Activated CD4-positive, alpha-beta T cell treated with anti-CD3 and anti-CD28 coated beads for 36 hours (primary cell): ENCODE measurements at regions of chr9 and their contacts with region 1.

Region 1: GRCh38 chr9:136118320-136119060 is at the start of gene TMEM250:
- DNase-seq: peak; percentile 98
- ATAC-seq: peak; percentile 92
- H3K4me3 Mint-ChIP-seq: peak within 1 kb of the TSS; percentile 77
- H3K27ac Mint-ChIP-seq: peak within 1 kb of the TSS; percentile 83
- H3K4me1 Mint-ChIP-seq: peaks cover 21% of the 10 kb centered on the region
- H3K27me3 Mint-ChIP-seq: no peaks in the 10 kb centered on the region
- total RNA-seq, gene TMEM250: 25.4 to 28.8 TPM

Region 2: DNA sequence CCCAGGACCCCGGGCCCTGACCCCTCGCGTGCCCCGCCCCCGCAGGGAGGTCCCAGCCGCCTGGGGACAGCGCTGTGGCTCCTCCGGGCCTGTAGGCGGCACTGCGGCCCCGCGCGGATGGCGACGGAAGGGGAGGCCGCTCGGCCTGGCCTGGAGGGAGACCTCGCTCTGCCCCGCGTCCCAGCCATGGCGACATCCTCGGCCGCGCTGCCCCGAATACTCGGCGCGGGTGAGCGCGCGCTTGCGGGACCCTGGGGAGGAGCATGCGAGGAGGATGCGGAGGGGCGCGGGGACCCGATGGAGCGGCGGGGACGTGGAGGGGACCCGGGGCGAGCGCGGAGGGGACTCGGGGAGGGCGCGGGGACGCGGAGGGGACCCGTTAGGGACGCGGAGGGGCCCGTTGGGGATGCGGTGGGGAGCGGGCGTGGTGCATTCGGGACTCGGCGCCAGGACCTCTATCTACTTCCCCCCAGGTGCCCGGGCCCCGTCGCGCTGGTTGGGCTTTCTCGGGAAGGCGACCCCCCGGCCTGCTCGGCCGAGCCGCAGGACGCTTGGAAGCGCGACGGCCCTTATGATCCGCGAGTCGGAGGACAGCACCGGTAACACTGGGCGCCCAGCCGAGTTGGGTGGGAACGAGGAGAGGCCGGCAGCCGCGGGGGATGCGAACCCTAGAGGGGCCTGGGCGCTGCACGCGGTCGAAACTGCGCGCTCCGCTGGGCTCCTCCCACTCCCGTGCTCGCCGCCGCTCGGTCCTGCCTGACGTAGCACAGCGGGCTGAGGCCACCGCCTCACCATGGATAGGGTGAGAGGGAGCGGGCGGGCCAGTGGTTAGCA is 617.7 kb before region 1 on chr9 and contains the start of gene MRPS2:
- CTCF ChIA-PET with region 1: no interaction called
- POLR2A ChIA-PET with region 1: no interaction called
- intact Hi-C with region 1: loop called in 1 of 2 experiments (anchors 2 kb)
- DNase-seq: peak; percentile 91
- ATAC-seq: peak; percentile 93
- H3K4me3 Mint-ChIP-seq: peak within 1 kb of the TSS; percentile 85
- H3K27ac Mint-ChIP-seq: peak within 1 kb of the TSS; percentile 91
- H3K4me1 Mint-ChIP-seq: peaks cover 19% of the 10 kb centered on the region
- H3K27me3 Mint-ChIP-seq: no peaks in the 10 kb centered on the region
- total RNA-seq, gene MRPS2: 50.0 to 70.6 TPM

Region 3: GRCh38 chr9:135701959-135702721 is 416.4 kb before region 1 on chr9 and contains the start of gene KCNT1:
- CTCF ChIA-PET with region 1: no interaction called
- POLR2A ChIA-PET with region 1: no interaction called
- intact Hi-C with region 1: loop called in 1 of 2 experiments (anchors 1 kb)
- DNase-seq: peak; percentile 74
- ATAC-seq: peak; percentile 85
- H3K4me3 Mint-ChIP-seq: no peak within 1 kb of the TSS
- H3K27ac Mint-ChIP-seq: no peak within 1 kb of the TSS
- H3K4me1 Mint-ChIP-seq: no peaks in the 10 kb centered on the region
- H3K27me3 Mint-ChIP-seq: peaks cover 3% of the 10 kb centered on the region
- total RNA-seq, gene KCNT1: not detected

Region 4: DNA sequence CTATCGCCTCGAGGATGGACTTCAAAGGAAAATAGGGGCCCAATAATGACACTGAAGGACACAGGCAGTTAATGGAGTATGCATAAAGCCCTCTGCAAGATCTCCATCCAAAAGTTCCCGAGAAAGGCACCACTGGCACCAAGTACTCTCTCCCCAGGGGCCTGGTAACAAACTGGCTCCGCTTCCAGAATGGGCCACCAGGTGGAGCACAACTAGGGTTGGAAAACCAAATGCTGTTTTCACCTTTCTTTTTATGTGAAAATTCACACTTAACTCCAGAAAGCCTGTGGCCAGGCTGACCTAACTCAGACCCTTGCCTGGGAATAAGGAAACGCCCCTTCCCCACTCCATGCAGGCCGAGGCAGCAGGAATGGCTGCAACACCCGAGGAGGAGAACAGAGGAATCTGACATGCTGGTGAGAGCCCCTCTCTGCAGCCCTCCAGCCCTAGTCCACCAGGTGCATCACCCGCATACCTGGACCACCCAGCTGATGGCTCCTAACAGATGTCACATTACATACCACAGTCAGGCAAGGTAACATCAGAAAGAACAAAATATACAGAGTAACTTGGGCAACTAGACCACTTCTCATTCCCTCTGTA is 253.9 kb before region 1 on chr9:
- CTCF ChIA-PET with region 1: interaction called, 4 read pairs
- POLR2A ChIA-PET with region 1: no interaction called
- intact Hi-C with region 1: loop called in 1 of 2 experiments (anchors 1 kb)
- DNase-seq: peak; percentile 84
- ATAC-seq: peak; percentile 58
- H3K4me3 Mint-ChIP-seq: no peak overlapping the region
- H3K27ac Mint-ChIP-seq: no peak overlapping the region
- H3K4me1 Mint-ChIP-seq: peaks cover 31% of the 10 kb centered on the region
- H3K27me3 Mint-ChIP-seq: no peaks in the 10 kb centered on the region

Region 5: DNA sequence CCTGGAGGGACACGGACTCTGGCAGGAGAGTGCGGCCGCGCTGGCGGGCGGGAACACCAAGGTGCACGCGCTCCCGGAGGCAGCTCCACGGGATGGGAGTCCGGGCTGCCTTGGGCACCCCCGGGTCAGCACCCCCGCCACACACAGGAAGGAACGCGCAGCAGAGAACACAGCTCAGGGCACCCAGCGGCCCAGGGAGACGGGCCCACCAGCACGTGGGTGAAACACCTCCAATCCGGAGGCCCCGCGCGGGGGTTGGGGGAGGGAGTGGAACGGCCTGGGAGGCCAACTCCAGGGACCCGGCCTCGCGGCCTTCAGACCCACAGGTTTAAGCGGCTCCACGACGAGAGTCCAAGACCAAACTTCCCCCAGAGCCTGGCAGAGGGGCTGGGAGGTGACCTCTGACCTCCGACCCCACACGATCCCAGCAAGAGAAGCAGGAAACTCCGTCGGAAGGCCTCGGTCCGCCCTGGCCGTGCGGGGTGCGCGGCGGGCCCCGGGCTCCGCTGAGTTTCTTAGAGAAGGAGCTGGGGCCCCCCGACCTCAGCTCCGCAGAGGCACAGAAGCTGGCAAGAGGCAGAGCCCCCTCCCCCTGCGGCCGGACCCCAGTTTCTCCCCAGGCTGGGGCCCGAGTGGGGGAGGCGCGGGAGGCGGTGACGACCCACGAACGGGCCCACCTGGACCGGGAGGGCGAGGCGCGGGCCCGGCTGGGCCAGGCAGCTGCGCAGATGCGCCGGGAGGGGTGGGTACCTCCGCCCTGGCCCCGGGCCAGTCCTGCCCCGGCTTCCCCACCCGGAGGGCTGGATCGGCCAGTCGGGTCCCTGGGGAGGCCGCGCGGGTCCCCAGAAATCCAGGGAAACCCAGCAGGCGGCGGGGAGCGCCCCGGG is 24.3 kb before region 1 on chr9:
- CTCF ChIA-PET with region 1: interaction called, 26 read pairs
- POLR2A ChIA-PET with region 1: no interaction called
- intact Hi-C with region 1: loop called (anchors 1 kb)
- DNase-seq: peak; percentile 79
- ATAC-seq: peak; percentile 74
- H3K4me3 Mint-ChIP-seq: peak overlapping the region; percentile 68
- H3K27ac Mint-ChIP-seq: peak overlapping the region; percentile 63
- H3K4me1 Mint-ChIP-seq: peaks cover 6% of the 10 kb centered on the region
- H3K27me3 Mint-ChIP-seq: peaks cover 5% of the 10 kb centered on the region

Region 6: DNA sequence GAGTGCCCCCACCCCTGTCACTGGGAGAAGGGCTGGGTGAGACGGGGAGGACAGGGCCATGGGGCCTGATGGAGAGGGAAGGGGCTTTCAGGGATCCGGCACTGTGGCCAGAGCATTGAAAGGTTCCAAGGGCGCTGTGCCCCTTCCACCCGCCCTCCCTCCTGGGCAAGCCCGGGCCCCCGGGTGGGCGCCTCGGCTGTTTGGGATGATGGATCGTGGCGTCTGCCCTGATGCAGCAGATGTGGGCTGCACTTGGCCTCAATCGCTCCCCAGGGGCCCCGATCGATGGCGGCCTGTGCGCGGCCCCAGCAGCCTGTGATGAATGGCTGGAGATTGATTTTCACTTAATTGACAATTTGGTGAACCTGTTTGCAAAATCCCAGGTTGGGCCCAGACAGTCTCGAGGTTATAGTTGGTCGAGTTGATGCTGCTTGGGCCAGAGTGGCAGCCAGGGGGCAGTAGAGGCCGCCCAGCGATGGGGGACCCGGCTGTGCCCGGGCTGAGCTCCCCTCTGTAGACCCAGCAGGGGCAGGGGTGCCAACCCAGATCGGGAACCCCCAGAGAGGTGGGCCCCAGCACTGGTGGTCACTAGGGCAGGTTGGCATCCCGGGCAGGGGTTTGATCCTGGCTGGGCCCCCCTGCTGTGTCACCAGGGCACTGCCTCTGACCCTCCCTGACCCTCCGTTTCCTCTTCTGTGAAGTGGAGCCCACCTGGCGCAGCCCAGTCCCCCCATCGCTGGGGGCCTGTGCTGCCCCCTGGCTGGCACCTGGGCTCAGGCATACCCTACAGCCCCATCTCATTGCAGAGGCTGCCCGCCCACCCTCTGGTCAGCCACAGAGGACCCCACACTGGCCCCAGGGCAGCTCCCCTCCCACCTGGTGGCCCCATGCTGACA is 51.8 kb after region 1 on chr9:
- CTCF ChIA-PET with region 1: no interaction called
- POLR2A ChIA-PET with region 1: no interaction called
- intact Hi-C with region 1: no loop called
- DNase-seq: peak; percentile 80
- ATAC-seq: peak; percentile 88
- H3K4me3 Mint-ChIP-seq: no peak overlapping the region
- H3K27ac Mint-ChIP-seq: no peak overlapping the region
- H3K4me1 Mint-ChIP-seq: no peaks in the 10 kb centered on the region
- H3K27me3 Mint-ChIP-seq: peaks cover 6% of the 10 kb centered on the region

Region 7: GRCh38 chr9:136410500-136411287 is 292.2 kb after region 1 on chr9 and contains the starts of genes ENTR1 and PMPCA:
- CTCF ChIA-PET with region 1: no interaction called
- POLR2A ChIA-PET with region 1: no interaction called
- intact Hi-C with region 1: loop called in 1 of 2 experiments (anchors 1 kb)
- DNase-seq: peak; percentile 98
- ATAC-seq: peak; percentile 75
- H3K4me3 Mint-ChIP-seq: peak within 1 kb of the TSS; percentile 90
- H3K27ac Mint-ChIP-seq: peak within 1 kb of the TSS; percentile 94
- H3K4me1 Mint-ChIP-seq: peaks cover 49% of the 10 kb centered on the region
- H3K27me3 Mint-ChIP-seq: no peaks in the 10 kb centered on the region
- total RNA-seq, gene ENTR1: 57.2 to 67.7 TPM
- total RNA-seq, gene PMPCA: 88.0 to 113 TPM

Region 8: GRCh38 chr9:137551651-137552384 is 1433.3 kb after region 1 on chr9 and contains the start of gene MRPL41:
- CTCF ChIA-PET with region 1: no interaction called
- POLR2A ChIA-PET with region 1: no interaction called
- intact Hi-C with region 1: no loop called
- DNase-seq: peak; percentile 91
- ATAC-seq: peak; percentile 93
- H3K4me3 Mint-ChIP-seq: peak within 1 kb of the TSS; percentile 77
- H3K27ac Mint-ChIP-seq: peak within 1 kb of the TSS; percentile 63
- H3K4me1 Mint-ChIP-seq: peaks cover 11% of the 10 kb centered on the region
- H3K27me3 Mint-ChIP-seq: no peaks in the 10 kb centered on the region
- total RNA-seq, gene MRPL41: 20.9 to 26.8 TPM